HepG2 (cell line): ENCODE measurements at regions of chr5 and their contacts with region 1.

Region 1: DNA sequence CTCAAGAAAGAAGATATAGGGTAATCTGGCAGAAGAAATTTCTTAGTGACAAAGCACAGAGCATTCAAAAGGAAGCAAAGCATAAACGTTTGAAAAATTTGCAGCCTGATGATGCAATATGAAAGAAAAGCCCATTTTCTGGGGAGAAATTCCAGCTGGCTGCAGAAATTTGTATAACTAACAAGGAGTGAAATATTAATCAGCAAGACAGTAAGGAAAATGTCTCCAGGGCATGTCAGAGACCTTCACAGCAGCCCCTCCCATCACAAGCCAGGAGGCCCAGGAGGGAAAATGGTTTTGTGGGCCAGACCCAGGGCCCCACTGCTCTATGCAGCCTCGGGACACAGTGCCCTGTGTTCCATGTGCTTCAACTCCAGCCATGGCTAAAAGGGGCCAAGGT is 359.4 kb downstream of the HINT1 start:
- DNase-seq: no peak
- ATAC-seq: no peak
- H3K4me3 ChIP-seq: no peak overlapping the region
- H3K27ac ChIP-seq: no peak overlapping the region
- H3K4me1 ChIP-seq: no peaks in the 10 kb centered on the region
- H3K27me3 ChIP-seq: no peaks in the 10 kb centered on the region; a peak in 1 of 5 replicates
- CTCF ChIP-seq: no peak
- EP300 ChIP-seq: no peak
- POLR2A ChIP-seq: no peak
- RAD21 ChIP-seq: no peak

Region 2: GRCh38 chr5:130777794-130778193 is 27.9 kb before region 1 on chr5:
- CTCF ChIA-PET with region 1: no interaction called
- POLR2A ChIA-PET with region 1: no interaction called
- in situ Hi-C with region 1: no loop called
- intact Hi-C with region 1: loop called (anchors 1 kb)
- DNase-seq: no peak
- ATAC-seq: no peak
- H3K4me3 ChIP-seq: no peak overlapping the region
- H3K27ac ChIP-seq: no peak overlapping the region
- H3K4me1 ChIP-seq: no peaks in the 10 kb centered on the region
- H3K27me3 ChIP-seq: no peaks in the 10 kb centered on the region
- CTCF ChIP-seq: no peak
- EP300 ChIP-seq: no peak
- POLR2A ChIP-seq: no peak
- RAD21 ChIP-seq: no peak